ENCODE measurements at regions of chr5 and their contacts with region 1.

Region 1: DNA sequence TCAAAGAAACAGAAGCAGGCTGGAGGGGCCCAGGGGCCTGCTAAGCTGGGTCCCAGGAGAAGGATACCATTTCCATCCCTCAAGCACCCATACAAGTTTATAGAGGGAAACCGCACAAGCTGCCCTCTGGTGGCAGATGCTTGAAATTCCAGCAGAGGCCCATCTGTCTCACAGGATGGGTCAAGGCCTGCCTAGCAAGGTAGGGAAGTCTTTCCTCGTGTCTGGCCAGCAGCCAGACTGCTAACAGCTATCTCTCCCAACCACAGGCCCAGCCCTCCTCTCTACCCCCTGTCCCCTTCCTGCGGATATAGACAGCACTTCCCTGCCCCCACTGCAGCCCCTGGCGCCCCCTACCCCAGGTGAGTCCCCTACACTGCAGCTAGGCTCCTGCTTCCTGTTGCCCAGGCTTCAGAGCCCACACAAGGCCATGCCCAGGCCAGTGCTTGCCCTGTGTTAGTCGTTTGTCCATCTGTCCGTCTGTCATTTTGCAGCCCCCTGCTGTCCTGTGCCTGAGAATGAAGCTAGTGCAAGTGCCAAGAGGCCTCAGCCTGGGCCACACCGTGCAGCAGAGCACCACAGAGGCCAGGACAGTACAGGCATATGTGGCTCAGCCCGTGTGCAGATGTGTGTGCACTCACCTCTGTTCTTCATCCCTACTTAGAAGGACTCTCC is 26.2 kb downstream of the TCF7 start:
- DNase-seq: peak; percentile 57 to 82
- H3K4me3 ChIP-seq: no peak overlapping the region
- H3K27ac ChIP-seq: no peak overlapping the region
- H3K4me1 ChIP-seq: no peaks in the 10 kb centered on the region; a peak in 3 of 7 replicates
- H3K27me3 ChIP-seq: no peaks in the 10 kb centered on the region
- CTCF ChIP-seq: peak in 2 of 3 experiments; percentile 85 to 90; a peak in 3 of 4 replicates
- EP300 ChIP-seq: no peak
- POLR2A ChIP-seq: no peak
- RAD21 ChIP-seq: peak; percentile 71 to 75

Region 2: DNA sequence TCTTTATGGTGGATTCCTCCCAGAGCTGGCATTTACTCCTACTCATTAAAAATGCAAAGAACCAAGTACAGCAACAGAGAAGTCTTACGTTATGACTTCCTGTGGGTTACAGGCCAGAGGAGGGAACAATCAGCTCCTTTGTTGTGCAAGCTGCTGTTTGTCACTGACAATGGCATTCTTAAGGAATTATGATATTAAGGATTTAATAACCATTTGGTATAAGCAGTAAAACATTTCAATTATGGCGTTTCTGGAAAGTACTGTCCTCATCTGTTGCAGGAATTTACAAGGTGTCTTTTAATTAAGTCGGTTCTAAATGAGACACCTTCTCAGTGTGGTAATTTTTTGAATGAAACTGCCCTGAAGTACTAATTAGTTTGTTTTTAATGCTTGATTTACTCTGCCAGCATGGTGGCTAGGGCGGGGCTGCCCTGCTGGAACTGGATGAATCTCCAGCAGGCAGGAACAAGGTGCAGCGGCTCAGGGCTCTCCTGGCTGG is 86.8 kb before region 1 on chr5:
- CTCF ChIA-PET with region 1: interaction called, 629 read pairs
- POLR2A ChIA-PET with region 1: interaction called, 3 read pairs
- DNase-seq: no peak
- H3K4me3 ChIP-seq: no peak overlapping the region
- H3K27ac ChIP-seq: no peak overlapping the region
- H3K4me1 ChIP-seq: peaks cover 4 to 24% (median 15%) of the 10 kb centered on the region in 4 experiments
- H3K27me3 ChIP-seq: no peaks in the 10 kb centered on the region; a peak in 1 of 7 replicates
- CTCF ChIP-seq: no peak
- EP300 ChIP-seq: no peak
- POLR2A ChIP-seq: no peak
- RAD21 ChIP-seq: no peak

Region 3: GRCh38 chr5:134070725-134071613 is 69.7 kb before region 1 on chr5:
- CTCF ChIA-PET with region 1: interaction called, 18 read pairs
- POLR2A ChIA-PET with region 1: no interaction called
- DNase-seq: peak in 1 of 2 experiments; percentile 75
- H3K4me3 ChIP-seq: peak overlapping the region; percentile 14 to 57 (median 46)
- H3K27ac ChIP-seq: no peak overlapping the region
- H3K4me1 ChIP-seq: peaks cover 0 to 7% (median 2%) of the 10 kb centered on the region in 4 experiments; a peak in 4 of 7 replicates
- H3K27me3 ChIP-seq: peaks cover 0 to 8% (median 3%) of the 10 kb centered on the region in 4 experiments; a peak in 4 of 7 replicates
- CTCF ChIP-seq: peak; percentile 24 to 47 (median 30); a peak in 3 of 4 replicates
- EP300 ChIP-seq: no peak
- POLR2A ChIP-seq: no peak
- RAD21 ChIP-seq: peak; percentile 40 to 49

Region 4: GRCh38 chr5:134113902-134114875 is 26.5 kb before region 1 on chr5 and contains the start of gene TCF7:
- CTCF ChIA-PET with region 1: interaction called, 270 read pairs
- POLR2A ChIA-PET with region 1: interaction called, 3 read pairs
- DNase-seq: peak; percentile 59 to 79
- H3K4me3 ChIP-seq: peak within 1 kb of the TSS; percentile 62 to 89 (median 77)
- H3K27ac ChIP-seq: no peak within 1 kb of the TSS
- H3K4me1 ChIP-seq: peaks cover 0 to 15% (median 9%) of the 10 kb centered on the region in 4 experiments; a peak in 6 of 7 replicates
- H3K27me3 ChIP-seq: peaks cover 20 to 35% (median 32%) of the 10 kb centered on the region in 4 experiments
- CTCF ChIP-seq: no peak
- EP300 ChIP-seq: no peak
- POLR2A ChIP-seq: peak in 1 of 2 experiments; percentile 79; a peak in 2 of 3 replicates
- RAD21 ChIP-seq: no peak
- total RNA-seq, gene TCF7: 6.8 and 8.5 TPM in 2 replicates

Region 5: DNA sequence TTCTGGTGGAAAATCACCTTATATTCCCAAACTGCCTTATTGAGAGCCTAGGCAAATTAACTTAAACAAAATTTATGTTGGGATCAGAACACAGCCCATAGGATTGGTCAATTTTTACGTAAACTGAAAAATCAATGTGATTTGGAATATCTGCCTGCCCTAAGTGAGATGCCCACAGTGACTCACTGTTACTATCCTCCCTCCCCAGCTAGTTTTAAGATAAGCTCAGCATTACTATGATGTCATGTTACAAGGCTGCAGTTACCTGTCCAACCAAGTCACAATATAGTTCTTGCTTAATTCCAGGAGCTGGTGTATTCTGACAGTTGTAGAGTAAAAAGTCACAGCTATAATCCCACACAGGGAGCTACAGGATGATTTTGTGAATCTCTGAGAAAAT is 13.0 kb after region 1 on chr5:
- CTCF ChIA-PET with region 1: interaction called, 270 read pairs
- POLR2A ChIA-PET with region 1: interaction called, 3 read pairs
- DNase-seq: no peak
- H3K4me3 ChIP-seq: no peak overlapping the region
- H3K27ac ChIP-seq: no peak overlapping the region
- H3K4me1 ChIP-seq: no peaks in the 10 kb centered on the region
- H3K27me3 ChIP-seq: no peaks in the 10 kb centered on the region
- CTCF ChIP-seq: no peak
- EP300 ChIP-seq: no peak
- POLR2A ChIP-seq: no peak
- RAD21 ChIP-seq: no peak

Region 6: DNA sequence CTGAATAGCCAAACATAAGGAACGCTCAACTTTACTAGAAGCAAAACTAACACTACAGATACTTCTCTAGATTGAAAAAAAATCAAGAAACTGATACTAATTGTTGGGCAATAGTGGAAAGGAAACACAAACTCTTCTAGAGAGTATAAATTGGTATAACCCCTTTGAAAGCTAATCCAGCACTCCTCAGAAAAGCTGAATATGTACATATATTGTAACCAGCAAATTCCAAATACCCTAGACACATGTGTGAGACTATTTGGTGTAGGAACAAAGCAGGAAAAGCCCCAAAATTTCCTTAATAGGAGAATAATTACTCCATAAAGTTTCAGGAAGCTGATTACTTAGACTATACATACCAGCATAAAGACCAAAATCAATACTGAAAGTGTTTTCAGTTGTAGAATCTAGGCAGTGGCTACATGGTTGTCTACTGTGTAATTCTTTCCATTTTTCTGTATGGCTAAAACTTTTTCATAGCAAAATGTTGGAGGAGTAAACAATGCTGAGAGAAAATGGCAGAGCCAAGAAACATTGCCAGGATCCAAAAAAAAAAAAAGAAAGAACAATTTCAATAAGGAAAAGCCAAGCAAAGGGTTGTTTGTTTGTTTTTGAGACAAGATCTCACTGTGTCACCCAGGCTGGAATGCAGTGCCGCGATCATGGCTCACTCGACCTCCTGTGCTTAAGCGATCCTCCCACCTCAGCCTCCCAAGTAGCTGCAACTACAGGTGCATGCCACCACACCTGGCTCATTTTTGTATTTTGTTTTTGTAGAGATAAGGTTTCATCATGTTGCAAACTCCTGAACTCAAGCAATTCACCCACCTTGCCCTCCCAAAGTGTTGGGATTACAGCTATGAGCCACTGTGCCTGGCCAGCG is 21.1 kb after region 1 on chr5:
- CTCF ChIA-PET with region 1: interaction called, 20 read pairs
- POLR2A ChIA-PET with region 1: interaction called, 3 read pairs
- DNase-seq: no peak
- H3K4me3 ChIP-seq: no peak overlapping the region
- H3K27ac ChIP-seq: no peak overlapping the region
- H3K4me1 ChIP-seq: no peaks in the 10 kb centered on the region
- H3K27me3 ChIP-seq: no peaks in the 10 kb centered on the region
- CTCF ChIP-seq: no peak
- EP300 ChIP-seq: no peak
- POLR2A ChIP-seq: no peak
- RAD21 ChIP-seq: no peak

Measured in H1 (cell line).